Common myeloid progenitor, CD34-positive (primary cell): ENCODE measurements at regions of chr2 and their contacts with region 1.

Region 1: GRCh38 chr2:6896930-6897759 is 19.6 kb downstream of the RSAD2 start:
- DNase-seq: peak; percentile 55 to 64 (median 60)
- H3K4me3 ChIP-seq: no peak overlapping the region
- H3K27ac ChIP-seq: no peak overlapping the region
- H3K4me1 ChIP-seq: no peaks in the 10 kb centered on the region
- H3K27me3 ChIP-seq: no peaks in the 10 kb centered on the region

Region 2: GRCh38 chr2:6877402-6878304 is 19.5 kb before region 1 on chr2 and contains the start of gene RSAD2:
- CTCF ChIA-PET with region 1: interaction called, 23 read pairs
- POLR2A ChIA-PET with region 1: no interaction called
- DNase-seq: peak; percentile 68 to 86 (median 81)
- H3K4me3 ChIP-seq: peak within 1 kb of the TSS in 6 of 7 experiments; percentile 58 to 89 (median 74)
- H3K27ac ChIP-seq: peak within 1 kb of the TSS; percentile 16 to 67
- H3K4me1 ChIP-seq: peaks cover 27 to 74% (median 58%) of the 10 kb centered on the region in 4 experiments
- H3K27me3 ChIP-seq: no peaks in the 10 kb centered on the region

Region 3: DNA sequence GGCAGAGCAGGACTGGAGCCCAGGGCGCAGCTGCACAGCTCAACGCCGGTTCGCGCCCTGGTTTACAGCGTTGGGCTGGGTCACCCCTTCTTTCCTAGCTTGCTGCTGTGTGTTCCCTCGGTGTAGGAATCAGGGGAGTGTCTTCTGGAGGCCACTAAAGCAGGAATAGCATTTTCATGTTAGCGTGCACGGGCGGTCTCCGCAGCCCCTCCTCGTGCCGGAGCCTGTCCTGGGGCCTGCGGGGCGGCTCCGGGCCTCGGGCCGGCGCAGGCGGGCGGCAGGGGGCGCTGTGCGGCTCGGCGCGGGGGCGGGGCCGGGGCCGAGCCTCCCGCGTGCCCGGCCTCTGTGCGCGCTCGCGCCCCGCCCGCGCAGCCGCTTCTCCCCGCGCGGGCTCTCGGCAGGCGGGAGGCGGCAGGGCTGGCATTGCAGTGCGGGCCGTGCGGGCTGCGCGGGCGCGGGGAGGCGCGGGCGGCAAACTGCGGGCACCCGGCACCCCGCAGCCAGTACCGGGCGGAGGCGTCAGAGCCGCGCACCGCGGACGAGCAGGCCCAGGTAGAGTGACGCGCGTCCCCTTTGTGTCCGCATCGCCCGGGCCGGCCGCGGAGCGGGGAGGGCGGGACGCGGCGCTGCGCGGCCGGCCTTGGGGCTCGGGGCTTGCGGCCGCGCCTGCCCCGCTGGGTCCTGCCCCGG is 20.1 kb after region 1 on chr2 and contains the start of gene RNF144A:
- CTCF ChIA-PET with region 1: interaction called, 126 read pairs
- POLR2A ChIA-PET with region 1: no interaction called
- DNase-seq: peak; percentile 53 to 81 (median 78)
- H3K4me3 ChIP-seq: peak within 1 kb of the TSS; percentile 64 to 87 (median 79)
- H3K27ac ChIP-seq: no peak within 1 kb of the TSS
- H3K4me1 ChIP-seq: peaks cover 2 to 32% (median 24%) of the 10 kb centered on the region in 4 experiments
- H3K27me3 ChIP-seq: no peaks in the 10 kb centered on the region

Region 4: GRCh38 chr2:7014174-7014640 is 117.1 kb after region 1 on chr2:
- CTCF ChIA-PET with region 1: interaction called, 18 read pairs
- POLR2A ChIA-PET with region 1: no interaction called
- DNase-seq: peak; percentile 56 to 80 (median 75)
- H3K4me3 ChIP-seq: no peak overlapping the region
- H3K27ac ChIP-seq: no peak overlapping the region
- H3K4me1 ChIP-seq: peaks cover 10 to 40% (median 27%) of the 10 kb centered on the region in 4 experiments
- H3K27me3 ChIP-seq: no peaks in the 10 kb centered on the region

Region 5: GRCh38 chr2:7097348-7097895 is 200.3 kb after region 1 on chr2:
- CTCF ChIA-PET with region 1: no interaction called
- POLR2A ChIA-PET with region 1: no interaction called
- DNase-seq: peak; percentile 64 to 79 (median 74)
- H3K4me3 ChIP-seq: peak overlapping the region in 4 of 7 experiments; percentile 27 to 62 (median 47)
- H3K27ac ChIP-seq: no peak overlapping the region
- H3K4me1 ChIP-seq: peaks cover 0 to 6% (median 4%) of the 10 kb centered on the region in 4 experiments
- H3K27me3 ChIP-seq: no peaks in the 10 kb centered on the region